ENCODE measurements at regions of chr21 and their contacts with region 1.

Region 1: DNA sequence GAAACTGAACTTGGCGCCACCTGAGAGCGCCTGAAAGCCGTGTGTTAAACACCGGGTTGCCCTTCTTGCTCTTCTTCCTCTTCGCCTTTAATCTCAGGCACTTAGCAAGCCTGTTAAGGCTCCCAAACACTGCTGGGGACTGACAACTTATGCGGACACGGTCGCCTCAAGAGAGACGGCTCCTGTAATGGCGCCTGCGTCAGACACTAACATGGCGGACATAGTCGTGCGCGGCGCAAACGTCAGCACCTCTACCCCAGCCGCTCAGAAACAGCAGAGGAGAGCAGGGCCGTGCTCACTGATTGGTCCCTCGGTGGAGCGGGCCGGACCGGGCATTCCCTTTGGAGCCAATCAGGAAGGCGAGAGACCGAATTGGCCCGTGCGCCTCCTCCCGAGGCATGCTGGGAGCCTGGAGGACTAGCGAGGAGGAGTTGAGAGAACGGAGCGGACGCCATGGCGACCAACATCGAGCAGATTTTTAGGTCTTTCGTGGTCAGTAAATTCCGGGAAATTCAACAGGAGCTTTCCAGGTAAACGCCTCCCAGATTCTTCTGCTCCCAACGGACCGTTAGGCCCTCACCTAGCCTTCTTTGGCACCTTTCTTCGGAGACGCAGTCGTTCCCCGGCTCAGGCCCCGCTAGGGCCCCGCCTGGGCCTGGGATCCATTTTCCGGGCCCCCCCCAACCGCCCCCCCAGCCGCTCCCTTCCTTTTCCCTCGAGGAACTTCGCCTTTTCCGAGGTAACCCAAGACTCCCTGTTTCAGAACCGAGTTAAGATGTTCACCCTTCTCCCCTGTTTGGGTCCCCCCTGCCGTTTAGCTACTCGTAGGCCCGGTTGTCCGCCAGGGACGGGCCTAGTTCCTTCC is at the start of gene SON:
- DNase-seq: peak; percentile 99
- H3K4me3 Mint-ChIP-seq: peak within 1 kb of the TSS; percentile 90
- H3K27ac Mint-ChIP-seq: peak within 1 kb of the TSS; percentile 99
- H3K4me1 Mint-ChIP-seq: peaks cover 34% of the 10 kb centered on the region
- H3K27me3 Mint-ChIP-seq: no peaks in the 10 kb centered on the region
- total RNA-seq, gene SON: 269 to 273 TPM

Region 2: DNA sequence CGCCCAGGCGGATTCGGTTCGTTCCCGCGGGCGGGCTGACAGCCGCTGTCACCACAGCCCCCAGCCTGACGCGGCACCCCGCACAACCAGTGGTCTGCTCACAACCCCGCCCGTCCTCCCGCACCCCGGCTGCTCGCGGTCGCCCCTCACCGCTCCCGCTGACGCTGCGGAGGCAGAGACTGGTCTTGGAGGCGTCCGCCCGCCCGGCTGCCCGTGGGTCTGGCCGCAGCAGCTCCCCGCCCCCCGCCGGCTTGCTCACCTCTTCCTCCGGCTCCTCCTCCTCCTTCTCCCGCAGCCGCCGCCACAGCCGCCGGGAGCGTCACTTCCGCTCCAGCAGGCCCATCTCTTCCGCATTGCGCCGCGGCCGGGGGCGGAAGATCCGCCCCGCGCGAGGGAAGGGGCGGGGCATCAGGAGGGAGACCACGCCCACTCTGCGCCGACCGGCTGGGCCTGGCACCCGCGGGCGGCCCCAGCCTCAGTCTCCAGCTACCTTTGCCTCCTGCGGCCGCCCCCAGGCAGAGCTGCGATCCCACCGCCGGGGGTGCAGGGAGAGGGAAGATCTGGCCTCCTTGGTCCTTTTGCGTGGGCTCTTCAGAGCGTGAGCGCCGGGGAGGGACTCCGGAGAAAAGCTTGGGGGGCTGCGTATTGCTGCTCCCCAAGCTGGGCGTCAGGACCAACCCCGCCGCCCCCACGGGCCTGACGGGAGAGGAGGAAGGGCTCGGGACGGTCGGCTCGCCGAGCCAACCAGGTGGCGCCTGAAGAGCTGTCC is 815.0 kb before region 1 on chr21 and contains the start of gene SYNJ1:
- CTCF ChIA-PET with region 1: no interaction called
- intact Hi-C with region 1: loop called (anchors 2 kb)
- DNase-seq: peak; percentile 94
- H3K4me3 Mint-ChIP-seq: peak within 1 kb of the TSS; percentile 96
- H3K27ac Mint-ChIP-seq: peak within 1 kb of the TSS; percentile 88
- H3K4me1 Mint-ChIP-seq: peaks cover 45% of the 10 kb centered on the region
- H3K27me3 Mint-ChIP-seq: no peaks in the 10 kb centered on the region
- total RNA-seq, gene SYNJ1: 7.4 to 10.9 TPM

Region 3: GRCh38 chr21:33324291-33325221 is 218.3 kb before region 1 on chr21 and contains the start of gene IFNAR1:
- CTCF ChIA-PET with region 1: no interaction called
- intact Hi-C with region 1: loop called (anchors 1 kb)
- DNase-seq: peak; percentile 99
- H3K4me3 Mint-ChIP-seq: no peak within 1 kb of the TSS
- H3K27ac Mint-ChIP-seq: no peak within 1 kb of the TSS
- H3K4me1 Mint-ChIP-seq: peaks cover 28% of the 10 kb centered on the region
- H3K27me3 Mint-ChIP-seq: no peaks in the 10 kb centered on the region
- total RNA-seq, gene IFNAR1: 20.6 to 24.3 TPM

Region 4: DNA sequence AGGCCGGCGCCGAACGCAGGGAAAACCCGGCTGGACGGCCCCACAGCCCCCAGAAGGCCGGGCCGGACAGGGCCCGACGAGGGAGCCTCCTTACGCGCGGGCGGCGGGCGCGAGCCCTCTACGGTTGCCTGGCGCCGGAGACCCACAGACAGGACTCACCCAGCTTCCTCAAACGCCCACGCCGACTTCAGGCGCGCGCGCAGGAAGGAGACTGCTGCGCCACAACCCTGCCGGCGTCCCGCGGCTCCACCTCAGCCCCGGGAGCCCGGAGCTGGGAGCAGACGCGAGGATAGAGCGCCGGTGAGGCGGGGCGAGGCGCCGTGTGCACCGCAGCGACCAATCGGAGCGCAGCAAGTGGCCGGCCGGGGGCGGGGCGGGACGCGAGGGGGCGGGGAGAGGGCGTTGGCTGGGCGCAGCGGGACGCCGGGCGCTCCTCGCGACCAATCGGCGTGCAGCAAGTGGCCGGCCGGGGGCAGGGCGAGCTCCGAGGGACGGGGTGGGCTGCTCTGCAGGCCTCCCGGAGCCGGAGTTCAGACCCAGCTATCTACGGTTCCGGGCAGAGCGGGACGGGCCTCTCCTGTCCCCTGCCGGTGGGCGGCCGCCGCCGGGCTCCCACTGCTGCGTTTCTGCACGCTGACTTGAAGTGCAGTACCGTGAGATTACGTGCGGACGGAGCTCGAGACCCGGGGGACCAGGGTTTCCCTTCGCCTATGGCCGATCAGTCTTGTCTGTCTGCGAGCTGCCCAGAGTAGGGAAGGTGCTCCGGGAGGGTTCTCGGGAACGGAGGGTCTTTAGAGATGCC is 63.0 kb before region 1 on chr21 and contains the start of gene TMEM50B:
- CTCF ChIA-PET with region 1: interaction called, 3 read pairs
- intact Hi-C with region 1: loop called (anchors 1 kb)
- DNase-seq: peak; percentile 96
- H3K4me3 Mint-ChIP-seq: peak within 1 kb of the TSS; percentile 89
- H3K27ac Mint-ChIP-seq: peak within 1 kb of the TSS; percentile 68
- H3K4me1 Mint-ChIP-seq: peaks cover 15% of the 10 kb centered on the region
- H3K27me3 Mint-ChIP-seq: no peaks in the 10 kb centered on the region
- total RNA-seq, gene TMEM50B: 17.8 to 18.2 TPM

Region 5: DNA sequence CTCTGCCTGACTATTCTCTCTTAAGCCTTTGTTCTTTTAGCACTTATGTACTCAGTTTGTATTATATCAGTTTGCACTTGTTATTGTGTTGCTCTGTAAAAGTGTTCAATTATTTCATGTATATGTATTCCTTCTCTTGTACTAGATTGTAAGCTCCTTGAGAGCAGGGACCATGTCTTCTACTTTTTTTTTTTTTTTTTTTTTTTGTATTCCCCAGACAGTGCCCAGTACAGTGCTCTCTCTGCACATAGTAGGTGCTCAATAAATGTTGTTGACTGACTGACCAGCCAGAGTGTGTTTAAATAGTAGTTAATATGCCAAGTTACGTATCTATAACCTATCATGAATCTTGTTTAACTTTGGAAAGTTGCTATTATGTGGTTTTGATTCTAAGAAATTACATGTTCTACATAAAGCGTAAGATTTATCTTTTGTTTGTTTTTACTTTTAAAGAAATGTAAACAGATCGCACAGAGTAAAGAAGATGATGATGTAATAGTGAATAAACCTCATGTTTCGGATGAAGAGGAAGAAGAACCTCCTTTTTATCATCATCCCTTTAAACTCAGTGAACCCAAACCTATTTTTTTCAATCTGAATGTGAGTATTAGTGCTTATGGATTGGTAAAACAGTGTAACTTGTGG is 16.0 kb after region 1 on chr21:
- CTCF ChIA-PET with region 1: interaction called, 7 read pairs
- intact Hi-C with region 1: loop called (anchors 2 kb)
- DNase-seq: no peak
- H3K4me3 Mint-ChIP-seq: no peak overlapping the region
- H3K27ac Mint-ChIP-seq: no peak overlapping the region
- H3K4me1 Mint-ChIP-seq: peaks cover 70% of the 10 kb centered on the region
- H3K27me3 Mint-ChIP-seq: no peaks in the 10 kb centered on the region

Region 6: GRCh38 chr21:33598051-33598450 is 55.2 kb after region 1 on chr21:
- CTCF ChIA-PET with region 1: no interaction called
- intact Hi-C with region 1: no loop called
- DNase-seq: no peak
- H3K4me3 Mint-ChIP-seq: no peak overlapping the region
- H3K27ac Mint-ChIP-seq: no peak overlapping the region
- H3K4me1 Mint-ChIP-seq: no peaks in the 10 kb centered on the region
- H3K27me3 Mint-ChIP-seq: no peaks in the 10 kb centered on the region

Region 7: DNA sequence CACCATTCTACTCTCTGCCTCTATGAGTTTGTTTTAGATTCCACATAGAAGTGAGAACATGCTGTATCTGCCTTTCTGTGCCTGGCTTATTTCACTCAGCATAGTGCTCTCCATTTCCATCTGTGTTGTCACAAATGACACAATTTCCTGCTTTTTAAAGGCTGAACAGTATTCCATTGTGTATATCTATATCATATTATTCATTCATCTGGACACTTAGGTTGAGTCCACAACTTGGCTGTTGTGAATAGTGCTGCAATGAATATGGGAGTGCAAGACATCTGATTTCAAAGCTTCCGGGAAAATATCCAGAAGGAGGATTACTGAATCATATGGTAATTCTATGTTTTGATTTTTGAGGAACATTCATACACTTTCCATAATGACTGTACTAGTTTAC is 65.7 kb after region 1 on chr21:
- CTCF ChIA-PET with region 1: interaction called, 4 read pairs
- intact Hi-C with region 1: loop called (anchors 1 kb)
- DNase-seq: no peak
- H3K4me3 Mint-ChIP-seq: no peak overlapping the region
- H3K27ac Mint-ChIP-seq: peak overlapping the region; percentile 1
- H3K4me1 Mint-ChIP-seq: no peaks in the 10 kb centered on the region
- H3K27me3 Mint-ChIP-seq: no peaks in the 10 kb centered on the region

Region 8: DNA sequence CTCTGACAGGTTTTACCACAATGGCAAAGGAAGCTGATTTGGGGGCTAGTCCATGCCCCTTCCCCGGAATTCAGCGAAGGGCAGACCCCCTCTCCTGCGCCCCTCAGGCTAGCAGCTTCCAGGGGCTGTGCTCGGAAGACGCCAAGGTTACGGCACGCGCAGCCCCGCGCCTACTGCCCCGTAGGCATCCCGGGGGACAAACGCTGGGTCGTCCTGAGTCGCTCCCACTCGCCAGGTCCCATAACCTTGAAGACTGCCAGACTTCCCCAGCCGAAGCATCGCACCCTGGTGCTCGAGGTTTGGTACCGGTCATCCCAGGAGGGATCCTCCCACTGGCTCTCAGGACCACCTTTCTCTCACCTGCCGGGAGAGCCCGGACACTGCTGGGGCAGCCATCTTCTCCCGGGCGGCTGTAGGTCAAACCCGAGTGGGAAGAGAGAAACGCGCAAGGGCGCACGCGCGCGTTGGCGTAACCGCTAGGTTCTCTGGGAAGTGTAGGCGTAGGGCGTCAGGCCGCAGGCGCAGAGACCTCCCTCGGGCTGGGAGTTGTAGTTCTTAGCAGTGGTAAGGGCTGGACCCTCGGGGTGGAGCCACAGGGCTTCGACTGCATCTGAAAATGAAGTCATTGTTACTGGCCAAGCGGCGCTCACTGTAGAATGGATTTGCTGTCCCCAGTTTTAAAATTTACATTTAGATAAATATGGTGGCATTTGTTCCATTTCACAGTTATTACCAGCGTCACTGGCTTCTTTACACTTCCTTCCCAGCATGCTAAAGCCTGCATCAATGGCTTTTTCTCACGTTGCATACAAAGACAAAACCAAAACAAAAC is 372.7 kb after region 1 on chr21 and contains the start of gene ATP5PO:
- CTCF ChIA-PET with region 1: no interaction called
- intact Hi-C with region 1: loop called (anchors 1 kb)
- DNase-seq: peak; percentile 98
- H3K4me3 Mint-ChIP-seq: peak within 1 kb of the TSS; percentile 98
- H3K27ac Mint-ChIP-seq: peak within 1 kb of the TSS; percentile 95
- H3K4me1 Mint-ChIP-seq: peaks cover 27% of the 10 kb centered on the region
- H3K27me3 Mint-ChIP-seq: no peaks in the 10 kb centered on the region
- total RNA-seq, gene ATP5PO: 230 TPM

Measured in activated naive CD4-positive, alpha-beta T cell treated with anti-CD3 and anti-CD28 coated beads for 36 hours (primary cell).